Endothelial cell of umbilical vein (primary cell): ENCODE measurements at regions of chr11 and their contacts with region 1.

Region 1: DNA sequence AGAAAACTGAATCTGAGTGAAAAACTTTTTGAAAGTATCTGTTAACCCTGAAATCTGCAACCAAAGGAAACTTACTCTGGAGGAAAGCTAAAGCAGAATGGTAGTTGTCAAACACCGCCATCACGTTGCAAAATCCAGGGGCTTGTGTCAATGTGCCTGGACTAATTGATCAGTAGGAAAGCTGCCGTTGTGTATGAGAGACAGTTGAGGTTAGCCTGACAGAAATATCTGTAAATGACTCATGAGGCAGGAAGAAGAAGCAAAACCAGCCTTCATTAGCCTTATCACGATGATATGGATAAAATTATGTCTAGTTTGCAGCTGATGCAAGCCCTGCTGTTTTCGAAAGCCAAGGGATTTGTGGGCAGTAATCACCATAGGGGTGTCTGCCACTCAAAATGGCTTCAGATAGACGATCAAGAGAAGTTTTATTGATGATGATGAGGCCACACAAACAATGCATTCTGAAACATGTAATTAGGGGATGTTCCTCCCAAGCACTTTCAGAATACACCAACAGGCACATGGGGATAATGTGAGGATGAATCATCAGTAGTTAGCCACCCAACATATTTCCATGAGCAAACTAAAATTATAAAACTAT is 8.9 kb downstream of the SCGB1A1 start:
- DNase-seq: no peak
- H3K4me3 ChIP-seq: no peak overlapping the region
- H3K27ac ChIP-seq: no peak overlapping the region
- H3K4me1 ChIP-seq: no peaks in the 10 kb centered on the region
- H3K27me3 ChIP-seq: peaks cover 0 to 3% of the 10 kb centered on the region in 2 experiments
- CTCF ChIP-seq: no peak
- POLR2A ChIP-seq: no peak

Region 2: DNA sequence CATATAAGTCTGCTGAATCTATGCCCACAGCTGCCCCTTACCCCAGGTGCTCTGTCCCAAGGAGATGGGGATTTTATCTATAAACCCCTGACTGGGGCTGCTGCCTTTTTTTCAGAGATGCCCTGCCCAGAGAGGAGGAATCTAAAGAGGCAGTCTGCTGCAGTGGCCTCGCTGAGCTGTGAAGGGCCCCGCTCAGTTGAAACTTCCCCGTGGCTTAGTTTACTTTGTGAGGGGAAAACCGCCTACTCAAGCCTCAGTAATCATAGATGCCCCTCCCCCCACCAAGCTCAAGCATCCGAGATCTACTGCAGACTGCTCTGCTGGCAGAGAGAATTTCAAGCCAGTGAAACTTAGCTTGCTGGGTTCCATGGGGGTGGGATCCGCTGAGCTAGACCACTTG is 121.5 kb before region 1 on chr11:
- CTCF ChIA-PET with region 1: no interaction called
- POLR2A ChIA-PET with region 1: no interaction called
- dilution Hi-C with region 1: no loop called
- intact Hi-C with region 1: no loop called
- DNase-seq: no peak
- H3K4me3 ChIP-seq: no peak overlapping the region
- H3K27ac ChIP-seq: no peak overlapping the region
- H3K4me1 ChIP-seq: no peaks in the 10 kb centered on the region
- H3K27me3 ChIP-seq: peaks cover 16 to 17% of the 10 kb centered on the region in 2 experiments
- CTCF ChIP-seq: no peak
- POLR2A ChIP-seq: no peak

Region 3: GRCh38 chr11:62337303-62338181 is 90.2 kb before region 1 on chr11 and contains the start of gene ASRGL1:
- CTCF ChIA-PET with region 1: no interaction called
- POLR2A ChIA-PET with region 1: no interaction called
- dilution Hi-C with region 1: no loop called
- intact Hi-C with region 1: no loop called
- DNase-seq: peak; percentile 77
- H3K4me3 ChIP-seq: peak within 1 kb of the TSS; percentile 58 to 62 (median 62)
- H3K27ac ChIP-seq: no peak within 1 kb of the TSS
- H3K4me1 ChIP-seq: peaks cover 28% of the 10 kb centered on the region
- H3K27me3 ChIP-seq: peaks cover 5 to 19% of the 10 kb centered on the region in 2 experiments
- CTCF ChIP-seq: peak in 1 of 2 donors; percentile 15
- POLR2A ChIP-seq: peak; percentile 36
- total RNA-seq, gene ASRGL1: 30.5 and 33.1 TPM in 2 replicates

Region 4: DNA sequence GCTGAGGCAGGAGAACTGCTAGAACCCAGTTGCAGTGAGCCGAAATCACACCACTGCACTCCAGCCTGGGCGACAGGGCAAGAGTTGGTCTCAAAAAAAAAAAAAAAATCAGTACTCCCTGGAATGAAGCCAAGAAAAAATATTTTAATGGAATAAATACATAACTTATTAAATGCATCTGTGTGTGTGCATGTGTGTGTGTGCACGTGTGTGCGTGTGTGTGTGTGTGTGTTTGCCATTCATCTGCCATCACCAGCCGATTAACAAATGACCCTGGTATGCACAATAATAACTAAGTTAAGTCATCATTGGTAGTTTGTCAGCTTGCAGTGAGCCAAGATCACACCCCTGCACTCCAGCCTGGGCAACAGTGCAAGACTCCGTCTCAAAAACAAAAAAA is 43.9 kb before region 1 on chr11:
- CTCF ChIA-PET with region 1: interaction called, 7 read pairs
- POLR2A ChIA-PET with region 1: no interaction called
- dilution Hi-C with region 1: no loop called
- intact Hi-C with region 1: loop called (anchors 1 kb)
- DNase-seq: no peak
- H3K4me3 ChIP-seq: no peak overlapping the region
- H3K27ac ChIP-seq: no peak overlapping the region
- H3K4me1 ChIP-seq: no peaks in the 10 kb centered on the region
- H3K27me3 ChIP-seq: no peaks in the 10 kb centered on the region
- CTCF ChIP-seq: no peak
- POLR2A ChIP-seq: no peak

Region 5: DNA sequence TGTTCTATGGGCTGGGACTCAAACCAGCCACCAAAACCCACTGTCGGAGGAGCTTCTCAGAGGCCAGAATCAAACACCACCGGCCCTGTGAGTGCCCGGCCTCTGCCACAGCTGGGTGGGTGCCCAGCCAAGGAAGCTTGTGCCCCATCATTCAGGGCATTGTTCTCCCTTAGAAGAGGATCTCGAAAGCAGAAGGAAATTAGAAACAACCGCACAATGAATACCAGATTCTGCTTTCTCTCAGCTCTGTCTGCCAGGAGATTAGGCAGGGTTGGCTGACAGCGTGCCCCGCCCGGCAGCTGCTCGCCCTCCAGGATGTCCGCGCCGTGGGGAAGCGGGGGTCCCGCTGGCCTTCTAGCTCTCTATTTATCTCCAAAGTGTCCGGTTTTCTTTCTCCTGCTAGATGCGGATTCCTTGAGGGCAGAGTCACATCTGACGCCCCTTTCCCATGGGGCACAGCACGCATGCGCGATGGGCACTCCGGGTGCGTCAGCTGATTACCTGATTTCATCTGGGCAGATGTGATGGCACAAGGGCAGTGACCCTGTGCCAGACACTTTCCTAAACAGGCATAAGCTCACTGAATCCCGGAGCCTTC is 16.6 kb after region 1 on chr11:
- CTCF ChIA-PET with region 1: interaction called, 23 read pairs
- POLR2A ChIA-PET with region 1: no interaction called
- dilution Hi-C with region 1: no loop called
- intact Hi-C with region 1: no loop called
- DNase-seq: peak; percentile 68
- H3K4me3 ChIP-seq: peak overlapping the region in 2 of 3 experiments; percentile 37 to 41
- H3K27ac ChIP-seq: no peak overlapping the region
- H3K4me1 ChIP-seq: peaks cover 11% of the 10 kb centered on the region
- H3K27me3 ChIP-seq: no peaks in the 10 kb centered on the region
- CTCF ChIP-seq: no peak
- POLR2A ChIP-seq: no peak

Region 6: DNA sequence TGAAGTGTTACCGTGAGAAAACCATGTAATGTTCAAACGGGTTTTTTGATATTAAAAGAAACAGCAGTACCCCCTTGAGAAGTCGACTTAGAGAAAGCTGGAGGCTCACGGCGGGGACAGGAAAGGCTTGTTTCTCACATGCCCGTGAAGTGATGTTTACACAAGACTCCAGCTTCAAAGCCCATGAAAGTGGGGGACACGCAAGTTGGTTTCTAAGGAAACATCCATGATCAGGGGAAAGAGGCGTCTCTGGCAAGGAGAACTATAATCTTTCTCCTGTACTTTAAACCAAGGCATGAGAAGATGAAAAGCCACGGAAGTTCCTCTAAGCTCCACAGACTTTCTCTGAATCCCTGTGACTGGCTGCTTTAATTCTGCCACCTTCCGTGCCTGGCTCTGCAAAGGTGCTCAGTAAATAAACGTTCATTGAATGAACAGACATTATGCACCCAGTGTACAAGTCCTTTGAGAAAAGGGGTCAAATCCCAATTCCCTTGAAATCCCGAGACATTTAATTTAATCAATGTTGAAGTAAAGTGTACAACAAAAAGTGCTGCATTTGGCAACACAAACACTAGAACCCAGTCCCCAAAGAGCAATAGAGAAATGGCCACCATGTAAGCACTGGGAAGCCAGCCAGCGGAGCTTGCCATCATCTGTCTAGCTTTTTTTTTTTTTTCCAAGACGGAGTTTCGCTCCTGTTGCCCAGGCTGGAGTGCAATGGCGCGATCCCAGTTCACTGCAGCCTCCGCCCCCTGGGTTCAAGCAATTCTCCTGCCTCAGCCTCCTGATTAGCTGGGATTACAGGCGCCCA is 60.2 kb after region 1 on chr11:
- CTCF ChIA-PET with region 1: interaction called, 20 read pairs
- POLR2A ChIA-PET with region 1: no interaction called
- dilution Hi-C with region 1: no loop called
- intact Hi-C with region 1: no loop called
- DNase-seq: peak; percentile 27
- H3K4me3 ChIP-seq: no peak overlapping the region
- H3K27ac ChIP-seq: no peak overlapping the region
- H3K4me1 ChIP-seq: no peaks in the 10 kb centered on the region
- H3K27me3 ChIP-seq: no peaks in the 10 kb centered on the region
- CTCF ChIP-seq: no peak
- POLR2A ChIP-seq: no peak

Region 7: GRCh38 chr11:62556108-62556871 is 128.6 kb after region 1 on chr11:
- CTCF ChIA-PET with region 1: interaction called, 162 read pairs
- POLR2A ChIA-PET with region 1: interaction called, 5 read pairs
- dilution Hi-C with region 1: no loop called
- intact Hi-C with region 1: loop called (anchors 1 kb)
- DNase-seq: peak; percentile 94
- H3K4me3 ChIP-seq: peak overlapping the region in 1 of 3 experiments; percentile 6
- H3K27ac ChIP-seq: peak overlapping the region; percentile 56
- H3K4me1 ChIP-seq: peaks cover 75% of the 10 kb centered on the region
- H3K27me3 ChIP-seq: no peaks in the 10 kb centered on the region
- CTCF ChIP-seq: no peak
- POLR2A ChIP-seq: peak; percentile 80

Region 8: DNA sequence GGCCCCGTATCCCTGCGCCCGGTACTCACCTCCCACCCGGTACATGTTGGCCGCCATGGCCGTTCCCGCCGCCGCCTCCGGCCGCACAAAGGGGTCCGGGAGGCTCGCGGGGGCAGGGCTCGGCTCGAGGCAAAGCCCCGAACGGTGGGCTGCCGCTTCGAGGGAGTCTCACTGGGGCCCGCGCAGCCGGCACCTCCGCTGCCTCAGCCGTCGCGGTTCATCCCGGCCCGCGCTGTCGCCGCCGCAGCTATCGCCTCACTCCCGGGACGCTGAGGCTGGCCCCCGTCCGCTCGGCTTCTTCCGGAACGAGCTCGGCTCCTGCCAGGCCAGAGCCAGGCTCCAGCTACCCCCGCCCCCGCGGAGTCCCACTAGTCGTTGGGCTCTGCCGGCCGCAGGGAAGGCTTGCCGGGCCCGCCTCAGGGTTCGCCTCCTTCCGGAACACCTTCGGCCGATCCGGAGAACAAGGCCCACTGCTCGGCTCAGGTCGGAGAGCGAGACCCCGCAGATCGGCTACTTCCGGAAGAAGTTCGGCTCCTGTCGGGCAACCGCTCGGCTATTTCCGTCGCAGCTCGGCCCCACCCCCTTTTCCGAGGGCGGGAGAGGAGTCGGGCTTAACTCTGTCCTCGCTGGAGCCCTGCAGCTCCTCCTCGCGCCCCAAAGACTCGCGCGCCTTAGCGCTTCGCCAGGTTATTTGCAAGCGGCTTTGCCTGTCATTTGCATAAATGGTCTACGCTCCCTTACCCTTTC is 173.8 kb after region 1 on chr11 and contains the start of gene MTA2:
- CTCF ChIA-PET with region 1: interaction called, 12 read pairs
- POLR2A ChIA-PET with region 1: no interaction called
- dilution Hi-C with region 1: no loop called
- intact Hi-C with region 1: no loop called
- DNase-seq: peak; percentile 99
- H3K4me3 ChIP-seq: peak within 1 kb of the TSS; percentile 61 to 98 (median 92)
- H3K27ac ChIP-seq: peak within 1 kb of the TSS; percentile 54
- H3K4me1 ChIP-seq: peaks cover 19% of the 10 kb centered on the region
- H3K27me3 ChIP-seq: no peaks in the 10 kb centered on the region
- CTCF ChIP-seq: no peak
- POLR2A ChIP-seq: peak; percentile 75
- total RNA-seq, gene MTA2: 166 and 176 TPM in 2 replicates